ENCODE measurements at regions of chr1 and their contacts with region 1.

Region 1: GRCh38 chr1:22131875-22132486 is 10.9 kb downstream of the WNT4 start:
- DNase-seq: peak; percentile 23
- ATAC-seq: peak; percentile 89
- H3K4me3 ChIP-seq: no peak overlapping the region
- H3K27ac ChIP-seq: no peak overlapping the region
- H3K4me1 ChIP-seq: peaks cover 5 to 13% of the 10 kb centered on the region in 2 experiments
- H3K27me3 ChIP-seq: no peaks in the 10 kb centered on the region
- CTCF ChIP-seq: peak; percentile 79 to 90 (median 86)
- POLR2A ChIP-seq: no peak
- RAD21 ChIP-seq: peak; percentile 97

Region 2: DNA sequence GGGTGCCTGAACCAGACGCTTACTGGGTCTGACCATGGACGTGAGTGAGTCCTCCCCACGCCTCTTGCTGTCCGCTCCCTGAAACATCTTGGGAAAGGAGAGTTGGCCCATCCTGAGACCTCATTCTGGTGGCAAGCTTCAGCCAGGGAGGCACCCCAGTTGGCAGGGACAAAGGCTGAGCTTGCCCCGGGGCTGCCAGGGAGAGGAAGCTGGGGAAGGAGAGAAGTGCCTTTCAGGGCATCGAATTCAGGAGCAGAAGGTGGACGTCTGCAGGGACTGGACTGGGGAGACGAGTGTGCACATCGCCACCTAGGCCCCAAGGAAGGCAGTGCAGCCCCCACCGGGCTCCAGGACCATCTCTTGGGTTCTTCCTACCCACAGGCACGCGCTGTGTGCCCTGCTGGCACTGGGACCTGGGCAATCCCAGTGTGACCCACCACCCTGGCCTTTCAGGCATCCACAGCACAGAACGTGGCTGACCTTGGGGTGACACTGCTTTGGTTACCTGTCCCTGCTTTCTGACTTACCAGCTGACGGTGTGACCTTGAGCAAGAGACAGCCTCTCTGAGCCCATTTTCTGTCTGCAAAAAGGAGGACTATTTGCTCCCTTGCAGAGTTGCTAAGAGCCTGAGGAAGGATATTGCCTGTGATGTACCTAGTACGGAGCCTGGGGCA is 143.9 kb after region 1 on chr1:
- CTCF ChIA-PET with region 1: no interaction called
- POLR2A ChIA-PET with region 1: no interaction called
- RAD21 ChIA-PET with region 1: no interaction called
- intact Hi-C with region 1: loop called (anchors 1 kb)
- DNase-seq: peak; percentile 29
- ATAC-seq: peak; percentile 99
- H3K4me3 ChIP-seq: no peak overlapping the region
- H3K27ac ChIP-seq: no peak overlapping the region
- H3K4me1 ChIP-seq: peaks cover 8% of the 10 kb centered on the region in 2 experiments; a peak in 3 of 4 replicates
- H3K27me3 ChIP-seq: no peaks in the 10 kb centered on the region
- CTCF ChIP-seq: peak; percentile 45 to 91 (median 79); a peak in 5 of 6 replicates
- POLR2A ChIP-seq: no peak
- RAD21 ChIP-seq: peak; percentile 66